ENCODE measurements at regions of chr15 and their contacts with region 1.

Region 1: DNA sequence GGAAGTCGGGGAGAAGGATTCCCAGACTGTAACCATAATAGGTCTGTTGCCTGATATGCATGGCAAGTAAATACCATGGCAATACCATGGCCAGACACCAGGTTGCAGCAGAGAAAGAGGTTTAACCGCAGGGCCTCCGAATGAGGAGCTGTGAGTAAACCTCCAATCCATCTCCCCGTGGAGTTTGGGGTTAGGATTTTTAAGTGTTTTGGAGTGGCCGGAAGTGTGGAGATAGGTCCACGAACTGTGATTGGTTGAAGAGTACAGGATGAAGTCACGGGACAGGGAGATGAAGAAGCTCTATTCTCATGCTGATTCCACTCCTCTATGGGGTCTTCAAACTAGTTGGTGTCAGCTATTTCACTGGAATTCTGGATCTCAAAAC is 127.9 kb downstream of the ST8SIA2 start:
- DNase-seq: peak; percentile 55
- H3K4me3 ChIP-seq: no peak overlapping the region
- H3K27ac ChIP-seq: no peak overlapping the region
- H3K27me3 ChIP-seq: no peaks in the 10 kb centered on the region
- CTCF ChIP-seq: peak; percentile 79

Region 2: DNA sequence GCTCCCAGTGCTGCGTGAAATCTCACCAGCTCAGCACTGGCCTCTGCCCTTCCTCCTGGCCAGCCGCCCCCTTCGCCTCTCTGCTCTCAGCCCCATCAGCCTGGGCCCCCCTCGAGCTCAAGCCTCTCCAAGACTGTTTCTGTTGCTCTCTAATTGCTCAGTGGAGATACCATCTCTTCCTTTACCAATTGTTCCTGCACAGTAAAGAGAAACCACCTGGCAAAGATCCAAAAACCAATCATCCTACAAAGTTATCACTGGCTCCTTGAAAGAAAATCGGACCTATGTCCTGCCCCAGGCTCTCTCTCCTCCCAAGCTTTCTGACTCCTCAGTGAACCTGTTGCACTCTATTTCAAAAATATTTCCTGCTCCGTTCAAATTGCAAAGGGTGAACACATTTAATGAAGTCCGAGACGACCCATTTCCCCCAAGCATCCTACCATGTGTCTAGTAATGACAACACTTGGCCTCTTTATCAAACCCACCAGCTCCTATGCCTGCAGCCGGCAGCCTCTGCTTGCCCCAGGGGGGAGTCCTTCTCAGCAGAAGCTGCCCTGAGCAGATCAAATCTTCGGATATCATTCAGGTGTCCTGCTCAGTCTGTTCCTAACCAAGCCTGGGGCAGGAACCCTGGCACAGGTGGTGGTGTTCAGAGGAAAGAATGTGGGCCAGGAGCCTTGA is 187.6 kb after region 1 on chr15:
- CTCF ChIA-PET with region 1: interaction called, 96 read pairs
- POLR2A ChIA-PET with region 1: no interaction called
- DNase-seq: no peak
- H3K4me3 ChIP-seq: no peak overlapping the region
- H3K27ac ChIP-seq: no peak overlapping the region
- H3K27me3 ChIP-seq: peaks cover 4% of the 10 kb centered on the region
- CTCF ChIP-seq: no peak

Measured in AG04450 (cell line).